K562 (cell line): ENCODE measurements at regions of chr10 and their contacts with region 1.

Region 1: GRCh38 chr10:3248888-3249758 is 76.5 kb upstream of the PITRM1 start:
- DNase-seq: peak in 2 of 4 experiments; percentile 22 to 24
- ATAC-seq: peak; percentile 66
- H3K4me3 ChIP-seq: no peak overlapping the region
- H3K27ac ChIP-seq: no peak overlapping the region
- H3K4me1 ChIP-seq: no peaks in the 10 kb centered on the region
- H3K27me3 ChIP-seq: peaks cover 32 to 36% of the 10 kb centered on the region in 2 experiments; a peak in 4 of 5 replicates
- CTCF ChIP-seq: no peak
- EP300 ChIP-seq: no peak
- POLR2A ChIP-seq: no peak
- RAD21 ChIP-seq: no peak

Region 2: GRCh38 chr10:4663162-4663904 is 1414.2 kb after region 1 on chr10:
- CTCF ChIA-PET with region 1: no interaction called
- POLR2A ChIA-PET with region 1: no interaction called
- in situ Hi-C with region 1: loop called (anchors 10 kb)
- intact Hi-C with region 1: no loop called
- DNase-seq: peak; percentile 22 to 81 (median 48)
- ATAC-seq: peak; percentile 97
- H3K4me3 ChIP-seq: no peak overlapping the region
- H3K27ac ChIP-seq: peak overlapping the region; percentile 38; the same call in 2 of the 3 replicates
- H3K4me1 ChIP-seq: peaks cover 0 to 7% of the 10 kb centered on the region in 2 experiments; a peak in 3 of 5 replicates
- H3K27me3 ChIP-seq: no peaks in the 10 kb centered on the region
- CTCF ChIP-seq: no peak
- EP300 ChIP-seq: peak; percentile 81
- POLR2A ChIP-seq: no peak
- RAD21 ChIP-seq: no peak